Activated CD4-positive, alpha-beta memory T cell treated with anti-CD3 and anti-CD28 coated beads, Interleukin-2, amount 10 ng/mL, durations not matched to agents 7 days and 5 days (primary cell): ENCODE measurements at regions of chr5 and their contacts with region 1.

Region 1: DNA sequence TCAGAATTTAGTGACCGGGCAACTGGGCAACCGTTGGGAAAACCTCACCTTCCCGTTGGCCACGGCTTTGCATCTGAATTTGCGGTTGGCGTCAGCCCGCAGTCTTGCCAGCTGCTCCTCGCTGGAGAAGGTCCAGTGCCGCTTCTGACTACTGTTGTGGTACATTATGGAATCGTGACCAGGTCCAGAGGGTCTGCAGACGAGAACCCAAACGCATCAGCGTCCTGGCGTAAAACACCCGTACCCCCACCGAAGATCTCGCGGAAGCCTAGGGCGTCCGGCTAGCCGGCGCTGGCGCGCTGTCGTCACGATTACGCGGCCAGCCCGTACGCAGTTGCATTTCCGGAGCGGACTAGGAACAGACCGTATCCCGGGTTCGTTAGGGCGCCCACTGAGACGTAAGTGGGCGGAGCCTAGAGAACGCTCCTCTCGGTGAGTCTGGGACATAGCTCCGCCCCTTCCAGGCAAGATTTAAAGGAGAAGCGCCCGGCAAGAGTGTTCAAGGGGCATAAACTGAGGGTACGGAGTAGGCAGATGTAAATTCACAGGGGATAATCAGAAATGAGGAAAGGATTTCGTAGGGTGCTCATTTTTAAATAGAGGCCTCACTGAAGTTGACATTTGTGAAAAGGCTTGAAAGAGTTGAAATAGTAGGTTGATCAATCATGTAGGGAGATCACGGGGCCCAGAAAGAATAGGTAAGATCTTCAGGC is at the start of gene CCNH:
- DNase-seq: peak; percentile 97
- H3K4me3 Mint-ChIP-seq: peak within 1 kb of the TSS; percentile 99
- H3K27ac Mint-ChIP-seq: peak within 1 kb of the TSS; percentile 91
- H3K4me1 Mint-ChIP-seq: peaks cover 40% of the 10 kb centered on the region
- H3K27me3 Mint-ChIP-seq: no peaks in the 10 kb centered on the region
- total RNA-seq, gene CCNH: 55.7 to 60.4 TPM

Region 2: GRCh38 chr5:87394411-87395165 is 18.2 kb before region 1 on chr5:
- CTCF ChIA-PET with region 1: interaction called, 8 read pairs
- POLR2A ChIA-PET with region 1: interaction called, 12 read pairs
- DNase-seq: no peak
- H3K4me3 Mint-ChIP-seq: no peak overlapping the region
- H3K27ac Mint-ChIP-seq: no peak overlapping the region
- H3K4me1 Mint-ChIP-seq: peaks cover 29% of the 10 kb centered on the region
- H3K27me3 Mint-ChIP-seq: no peaks in the 10 kb centered on the region

Region 3: GRCh38 chr5:87452837-87453236 is 40.1 kb after region 1 on chr5:
- CTCF ChIA-PET with region 1: no interaction called
- POLR2A ChIA-PET with region 1: no interaction called
- DNase-seq: no peak
- H3K4me3 Mint-ChIP-seq: no peak overlapping the region
- H3K27ac Mint-ChIP-seq: no peak overlapping the region
- H3K4me1 Mint-ChIP-seq: peaks cover 7% of the 10 kb centered on the region
- H3K27me3 Mint-ChIP-seq: peaks cover 16% of the 10 kb centered on the region